ENCODE measurements at regions of chr4 and their contacts with region 1.

Region 1: DNA sequence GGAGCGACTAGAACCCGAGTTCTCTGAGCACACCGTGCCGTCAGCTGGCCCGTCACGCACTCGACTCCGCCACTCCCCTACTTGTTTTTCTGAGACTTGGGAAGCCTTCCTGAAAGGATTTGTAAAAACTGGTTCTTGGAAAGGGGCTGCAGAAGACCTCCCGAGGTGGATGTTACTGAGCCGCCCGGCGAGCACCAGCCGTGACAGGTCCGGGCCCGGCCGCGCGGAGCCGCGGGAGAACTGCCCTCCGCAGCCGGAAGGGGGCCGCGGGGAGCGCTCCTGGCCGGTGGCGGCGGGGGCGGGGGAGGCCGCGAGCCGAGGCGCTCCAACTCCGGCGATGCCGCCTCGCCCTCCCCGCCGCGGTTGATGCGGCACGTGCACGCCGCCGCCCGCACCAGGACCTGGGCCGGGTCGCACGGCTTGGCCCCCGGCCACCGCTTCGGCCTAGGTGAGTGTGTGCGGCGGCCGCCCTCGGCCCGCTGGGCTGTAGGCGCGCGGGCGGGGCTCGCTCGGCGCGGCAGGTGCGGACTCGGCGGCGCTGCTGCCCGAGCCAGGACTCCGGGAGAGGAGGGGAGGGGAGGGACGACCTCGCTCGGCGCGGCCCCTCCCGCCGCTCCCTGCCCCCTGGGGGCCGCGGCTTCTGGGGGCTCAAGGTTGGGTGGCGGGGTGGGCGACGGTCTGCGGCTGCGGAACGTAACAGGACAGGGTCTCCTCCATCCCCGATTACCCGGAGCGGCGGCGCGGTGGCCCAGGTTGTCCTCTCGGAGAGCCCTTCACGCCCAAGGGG is 1.7 kb downstream of the SPRY1 start:
- DNase-seq: no peak
- H3K4me3 ChIP-seq: peak overlapping the region; percentile 62
- H3K27me3 ChIP-seq: no peaks in the 10 kb centered on the region
- CTCF ChIP-seq: peak; percentile 48

Region 2: GRCh38 chr4:123461996-123462395 is 63.7 kb after region 1 on chr4:
- CTCF ChIA-PET with region 1: no interaction called
- POLR2A ChIA-PET with region 1: no interaction called
- DNase-seq: no peak
- H3K4me3 ChIP-seq: no peak overlapping the region
- H3K27me3 ChIP-seq: no peaks in the 10 kb centered on the region; the same call in 1 of the 2 replicates
- CTCF ChIP-seq: no peak

Region 3: DNA sequence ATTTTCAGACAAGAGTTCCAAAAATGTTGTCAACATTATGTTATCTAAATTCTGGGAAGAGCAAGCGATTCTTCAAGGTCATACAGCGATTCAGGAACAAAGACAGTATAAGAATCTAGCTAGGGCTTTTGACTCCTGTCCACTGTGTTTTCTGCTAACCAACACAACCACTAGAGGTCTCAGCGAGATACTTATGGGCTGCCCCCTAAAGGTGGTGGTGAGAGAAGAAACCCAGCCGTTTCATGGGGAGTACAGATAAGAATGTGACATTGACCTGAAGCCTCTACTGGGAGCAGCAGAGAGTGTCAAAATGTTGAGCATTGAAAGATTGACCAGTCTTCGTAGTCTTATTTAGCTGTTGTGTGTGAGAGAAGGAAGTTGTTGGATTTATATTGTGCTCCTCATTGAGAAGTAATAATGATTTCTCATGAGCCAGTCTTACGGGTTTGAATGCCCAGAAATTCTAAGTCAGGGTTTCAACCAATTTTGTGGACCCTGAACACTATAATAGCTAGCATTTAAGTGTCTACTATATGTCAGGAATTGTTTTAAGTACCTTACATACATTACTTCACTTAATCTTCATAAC is 166.6 kb after region 1 on chr4:
- CTCF ChIA-PET with region 1: interaction called, 14 read pairs
- POLR2A ChIA-PET with region 1: no interaction called
- DNase-seq: no peak
- H3K4me3 ChIP-seq: no peak overlapping the region
- H3K27me3 ChIP-seq: no peaks in the 10 kb centered on the region
- CTCF ChIP-seq: peak; percentile 95

Region 4: GRCh38 chr4:124433500-124433899 is 1035.2 kb after region 1 on chr4:
- CTCF ChIA-PET with region 1: no interaction called
- POLR2A ChIA-PET with region 1: no interaction called
- DNase-seq: no peak
- H3K4me3 ChIP-seq: no peak overlapping the region
- H3K27me3 ChIP-seq: no peaks in the 10 kb centered on the region
- CTCF ChIP-seq: no peak